Activated CD4-positive, alpha-beta memory T cell treated with anti-CD3 and anti-CD28 coated beads for 36 hours (primary cell): ENCODE measurements at regions of chr6 and their contacts with region 1.

Region 1: DNA sequence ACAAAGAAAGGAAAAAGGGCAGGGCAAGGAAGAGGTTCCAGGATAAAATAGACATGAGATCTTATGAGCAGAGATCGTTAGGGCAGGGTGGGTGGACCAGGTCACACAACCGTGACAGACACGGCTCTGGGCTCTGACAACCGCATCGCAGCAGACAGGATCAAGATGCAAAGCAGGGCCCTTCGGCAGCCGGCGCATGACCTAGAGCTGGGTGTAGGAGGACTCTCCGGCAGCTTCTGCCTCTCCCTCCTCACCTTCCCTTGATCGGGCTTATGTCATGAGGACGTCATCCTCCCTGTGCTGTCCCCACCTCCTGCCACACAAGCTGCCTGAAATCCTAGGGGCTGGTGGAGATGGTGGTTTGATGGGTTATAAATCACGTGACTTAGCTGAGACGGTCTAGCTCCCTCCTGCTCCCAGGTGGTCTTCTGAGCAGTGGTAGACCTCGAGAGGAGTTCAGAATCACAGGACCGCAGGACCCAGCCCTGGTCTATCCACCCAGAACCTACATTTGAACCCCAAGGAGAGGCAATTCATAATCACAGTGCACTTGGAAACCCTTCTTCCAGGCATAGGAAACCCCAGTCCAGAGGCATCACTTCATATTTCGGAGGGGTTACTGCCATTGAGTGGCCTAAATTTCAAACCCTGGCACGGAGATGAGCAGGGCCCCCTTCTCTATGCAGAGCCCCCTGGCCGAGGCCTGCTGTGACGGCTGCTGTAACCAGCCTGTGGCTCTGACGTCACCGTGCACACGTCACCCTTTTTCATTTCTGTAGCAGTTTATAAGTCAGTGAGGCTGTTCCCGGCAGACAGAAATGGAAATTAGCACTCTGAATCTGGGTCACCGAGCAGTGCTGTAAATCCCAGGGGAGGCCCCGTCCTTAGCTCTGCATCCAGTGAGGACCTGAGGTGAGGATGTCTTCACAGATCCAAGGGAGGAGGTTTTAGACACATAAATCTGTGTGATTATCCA is 8.7 kb upstream of the CCR6 start:
- DNase-seq: peak; percentile 90
- H3K4me3 Mint-ChIP-seq: peak overlapping the region; percentile 76
- H3K27ac Mint-ChIP-seq: peak overlapping the region; percentile 94
- H3K4me1 Mint-ChIP-seq: peaks cover 83% of the 10 kb centered on the region
- H3K27me3 Mint-ChIP-seq: no peaks in the 10 kb centered on the region

Region 2: GRCh38 chr6:166999145-166999883 is 114.9 kb before region 1 on chr6 and contains the start of gene CEP43:
- CTCF ChIA-PET with region 1: interaction called, 3 read pairs
- POLR2A ChIA-PET with region 1: no interaction called
- intact Hi-C with region 1: loop called (anchors 5 kb)
- DNase-seq: peak; percentile 90
- H3K4me3 Mint-ChIP-seq: peak within 1 kb of the TSS; percentile 85
- H3K27ac Mint-ChIP-seq: peak within 1 kb of the TSS; percentile 85
- H3K4me1 Mint-ChIP-seq: peaks cover 28% of the 10 kb centered on the region
- H3K27me3 Mint-ChIP-seq: no peaks in the 10 kb centered on the region
- total RNA-seq, gene CEP43: 19.5 to 21.3 TPM